Posterior vena cava (tissue), 2 donors: ENCODE measurements at regions of chr1 and their contacts with region 1.

Region 1: GRCh38 chr1:161192476-161193465 is 6.1 kb downstream of the ADAMTS4 start:
- DNase-seq: peak; percentile 84

Region 2: GRCh38 chr1:161389691-161390558 is 197.2 kb after region 1 on chr1:
- intact Hi-C with region 1: loop called in 1 of 2 experiments (anchors 10 kb)
- DNase-seq: peak; percentile 99

Region 3: DNA sequence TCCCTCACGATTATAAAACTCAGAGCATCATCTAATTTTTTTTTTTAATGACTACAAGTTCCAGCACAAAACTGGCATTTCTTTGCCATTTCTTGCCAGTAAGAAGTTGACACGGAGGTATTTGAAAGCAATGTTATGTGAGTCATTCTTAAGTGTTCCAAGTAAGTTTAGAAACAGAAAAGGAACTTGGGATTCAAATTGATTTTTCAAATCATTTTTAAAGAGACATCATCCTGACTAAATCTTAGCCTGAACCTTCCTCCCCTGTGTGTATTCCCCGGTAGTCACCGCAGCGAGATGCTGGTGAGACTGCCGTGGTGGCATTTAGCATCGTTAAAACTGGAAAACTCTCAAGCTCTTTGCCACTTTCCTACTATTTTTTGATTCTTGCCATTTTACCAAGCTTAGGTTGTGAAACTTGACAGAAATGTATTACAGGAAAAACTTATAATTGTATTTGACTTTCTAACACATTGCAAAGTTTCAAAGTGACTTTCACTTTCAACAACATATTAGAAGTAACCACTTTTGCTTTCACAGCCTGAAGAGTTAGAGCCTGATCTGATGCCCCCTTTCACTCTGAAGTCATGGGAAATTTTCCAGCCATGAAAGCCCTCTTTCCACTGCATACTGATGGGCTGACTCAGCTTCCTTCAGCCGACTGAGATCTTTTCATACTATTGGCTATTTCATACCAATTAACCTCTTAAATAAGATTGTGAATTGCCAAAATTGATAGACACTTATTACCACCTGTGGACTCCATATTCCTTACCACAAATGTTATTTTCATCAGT is 769.5 kb after region 1 on chr1:
- intact Hi-C with region 1: loop called in 1 of 2 experiments (anchors 5 kb)
- DNase-seq: no peak